Activated T-helper 2 cell treated with anti-CD3 and anti-CD28 coated beads, Interferon-gamma antibody, Interleukin-2, Interleukin-4, amounts not matched to agents 10 μg/mL and 5 μg/mL and 100 μg/mL, durations not matched to agents 14 hours and 24 hours and 36 hours (primary cell): ENCODE measurements at regions of chr22 and their contacts with region 1.

Region 1: DNA sequence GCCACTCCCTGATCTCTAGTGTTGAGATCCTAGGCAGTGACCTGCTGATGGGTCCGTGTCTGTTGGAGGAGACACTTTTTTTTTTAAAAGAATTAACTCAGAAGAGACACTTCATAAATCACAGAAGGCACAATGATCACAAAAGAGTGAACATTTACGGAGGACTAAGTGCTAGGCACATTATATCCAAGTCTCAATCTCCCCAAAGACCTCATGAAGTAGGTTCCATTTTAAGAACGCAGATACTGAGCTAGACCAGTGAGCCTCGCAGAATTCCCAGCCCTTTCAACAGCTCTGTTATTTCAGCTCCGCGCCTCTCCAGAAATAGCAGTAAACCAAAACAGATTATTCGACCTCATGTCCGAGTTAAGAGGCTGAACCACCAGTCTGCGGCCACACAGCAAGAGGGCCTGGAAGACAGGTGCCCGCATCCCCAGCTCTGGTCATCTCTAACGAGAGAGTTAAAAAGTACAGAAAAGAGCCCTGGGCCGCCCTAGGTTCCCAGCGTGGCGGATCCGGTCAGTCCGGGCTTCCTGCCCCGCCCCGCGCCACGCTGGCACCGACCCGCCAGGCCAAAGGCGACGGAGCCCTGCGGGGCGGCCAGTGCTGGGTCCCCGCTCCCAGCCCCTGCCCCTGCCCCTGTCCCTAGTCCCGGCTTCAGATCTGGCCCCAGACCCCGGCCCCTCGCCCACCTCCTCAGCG is 612 bp downstream of the XBP1 start:
- DNase-seq: no peak
- H3K4me3 Mint-ChIP-seq: peak overlapping the region; percentile 99
- H3K27ac Mint-ChIP-seq: peak overlapping the region; percentile 97
- H3K4me1 Mint-ChIP-seq: peaks cover 43% of the 10 kb centered on the region
- H3K27me3 Mint-ChIP-seq: no peaks in the 10 kb centered on the region

Region 2: DNA sequence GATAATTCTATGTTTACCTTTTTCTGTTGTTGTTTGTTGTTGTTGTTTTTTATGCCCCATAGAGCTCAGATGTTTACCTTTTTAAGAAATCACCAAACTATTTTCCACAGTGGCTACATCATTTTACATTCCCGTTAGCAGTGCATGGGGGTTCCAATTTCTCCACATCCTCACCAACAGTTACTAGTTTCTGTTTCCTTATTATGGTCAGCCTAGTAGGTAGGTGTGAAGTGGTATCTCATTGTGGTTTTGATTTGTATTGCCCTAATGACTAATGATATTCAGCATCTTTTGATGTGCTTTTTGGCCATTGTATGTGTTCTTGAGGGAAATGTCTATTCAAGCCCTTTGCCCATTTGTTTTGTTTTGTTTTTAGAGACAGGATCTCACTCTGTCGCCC is 85.7 kb before region 1 on chr22:
- intact Hi-C with region 1: no loop called
- DNase-seq: no peak
- H3K4me3 Mint-ChIP-seq: no peak overlapping the region
- H3K27ac Mint-ChIP-seq: no peak overlapping the region
- H3K4me1 Mint-ChIP-seq: peaks cover 20% of the 10 kb centered on the region
- H3K27me3 Mint-ChIP-seq: no peaks in the 10 kb centered on the region

Region 3: GRCh38 chr22:28741758-28742561 is 57.8 kb before region 1 on chr22 and contains the starts of genes CHEK2 and HSCB:
- intact Hi-C with region 1: loop called (anchors 1 kb)
- DNase-seq: peak; percentile 97
- H3K4me3 Mint-ChIP-seq: peak within 1 kb of the TSS; percentile 87
- H3K27ac Mint-ChIP-seq: peak within 1 kb of the TSS; percentile 83
- H3K4me1 Mint-ChIP-seq: peaks cover 36% of the 10 kb centered on the region
- H3K27me3 Mint-ChIP-seq: no peaks in the 10 kb centered on the region
- total RNA-seq, gene CHEK2: 33.7 and 33.8 TPM in 2 replicates
- total RNA-seq, gene HSCB: 14.1 and 14.6 TPM in 2 replicates

Region 4: DNA sequence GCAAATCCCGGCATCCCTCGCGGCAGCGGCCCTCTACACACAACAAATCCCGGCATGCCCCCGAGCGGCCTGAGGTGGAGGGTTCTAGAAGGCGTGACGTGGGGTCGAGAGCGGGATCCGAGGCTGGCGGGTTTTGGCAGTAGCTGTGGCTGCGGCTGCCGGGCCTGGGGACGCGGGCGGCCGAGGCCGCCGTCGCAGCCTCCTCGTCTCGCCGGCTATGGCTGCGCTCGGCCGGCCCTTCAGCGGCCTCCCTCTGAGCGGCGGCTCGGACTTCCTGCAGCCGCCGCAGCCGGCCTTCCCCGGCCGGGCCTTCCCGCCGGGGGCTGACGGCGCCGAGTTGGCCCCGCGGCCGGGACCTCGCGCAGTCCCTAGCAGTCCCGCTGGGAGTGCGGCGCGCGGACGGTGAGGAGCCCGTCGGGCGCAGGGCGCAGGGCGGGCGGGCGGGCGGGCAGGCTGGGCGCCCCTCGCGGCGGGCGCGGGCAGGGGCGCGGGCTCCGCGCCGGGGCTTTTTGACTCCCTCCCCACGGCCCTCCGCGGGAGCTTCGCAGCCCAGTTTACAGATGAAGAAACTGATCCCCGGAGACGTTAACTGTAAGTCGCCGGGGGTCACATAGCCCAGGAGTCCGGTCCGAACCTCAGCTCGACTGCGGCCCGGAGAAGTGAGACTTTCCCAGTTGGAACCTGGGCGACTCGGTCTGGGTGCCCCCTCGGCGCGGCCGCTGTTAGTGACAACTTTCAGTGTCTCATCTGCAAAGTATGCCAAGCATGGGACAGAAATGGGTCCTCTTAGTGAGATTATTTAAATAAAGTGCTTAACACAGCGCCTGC is 26.9 kb before region 1 on chr22 and contains the start of gene CCDC117:
- intact Hi-C with region 1: loop called (anchors 1 kb)
- DNase-seq: peak; percentile 89
- H3K4me3 Mint-ChIP-seq: peak within 1 kb of the TSS; percentile 99
- H3K27ac Mint-ChIP-seq: peak within 1 kb of the TSS; percentile 100
- H3K4me1 Mint-ChIP-seq: peaks cover 19% of the 10 kb centered on the region
- H3K27me3 Mint-ChIP-seq: no peaks in the 10 kb centered on the region
- total RNA-seq, gene CCDC117: 33.9 and 38.6 TPM in 2 replicates

Region 5: GRCh38 chr22:28783786-28784671 is 15.7 kb before region 1 on chr22:
- intact Hi-C with region 1: no loop called
- DNase-seq: no peak
- H3K4me3 Mint-ChIP-seq: no peak overlapping the region
- H3K27ac Mint-ChIP-seq: no peak overlapping the region
- H3K4me1 Mint-ChIP-seq: peaks cover 16% of the 10 kb centered on the region
- H3K27me3 Mint-ChIP-seq: no peaks in the 10 kb centered on the region

Region 6: GRCh38 chr22:28810821-28811491 is 11.2 kb after region 1 on chr22:
- intact Hi-C with region 1: loop called (anchors 1 kb)
- DNase-seq: peak; percentile 50
- H3K4me3 Mint-ChIP-seq: peak overlapping the region; percentile 59
- H3K27ac Mint-ChIP-seq: peak overlapping the region; percentile 82
- H3K4me1 Mint-ChIP-seq: peaks cover 69% of the 10 kb centered on the region
- H3K27me3 Mint-ChIP-seq: no peaks in the 10 kb centered on the region

Region 7: DNA sequence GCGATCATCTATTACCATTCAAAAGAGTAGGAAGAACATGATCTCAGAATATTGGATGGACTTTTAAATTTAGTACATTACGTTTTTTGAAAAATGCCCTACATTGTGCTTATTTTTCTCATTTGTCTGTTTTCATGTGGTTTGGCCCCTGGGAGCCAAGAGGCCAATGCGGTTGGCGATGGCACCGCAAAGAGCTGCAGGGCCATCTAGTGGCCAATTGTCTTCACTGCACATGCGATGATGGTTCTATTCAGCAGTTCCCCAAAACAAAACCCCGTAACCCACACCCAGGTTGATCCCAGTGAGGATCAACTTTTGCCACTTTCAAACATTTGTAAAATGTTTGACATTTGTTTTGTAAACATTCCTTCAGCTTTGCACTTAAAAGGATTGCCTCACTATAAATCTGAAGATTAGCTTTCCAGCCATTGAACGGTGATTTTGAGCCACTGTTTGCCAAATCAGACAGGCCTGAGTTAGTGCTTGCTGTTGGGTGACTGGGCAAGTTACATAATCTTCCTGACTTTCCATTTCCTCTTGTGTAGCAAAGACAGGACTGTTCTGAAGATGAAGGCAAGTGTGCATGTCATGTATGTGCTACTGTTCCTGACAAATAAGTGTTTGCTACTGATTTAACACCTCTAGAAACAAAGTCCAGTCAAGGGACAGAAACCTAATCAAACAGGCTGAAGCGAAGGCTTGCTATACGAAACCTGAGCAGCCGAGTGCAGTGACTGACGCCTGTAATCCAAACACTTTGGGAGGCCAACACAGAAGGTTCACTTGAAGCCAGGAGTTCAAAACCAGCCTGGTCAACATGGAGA is 29.8 kb after region 1 on chr22:
- intact Hi-C with region 1: loop called (anchors 2 kb)
- DNase-seq: peak; percentile 65
- H3K4me3 Mint-ChIP-seq: no peak overlapping the region
- H3K27ac Mint-ChIP-seq: no peak overlapping the region
- H3K4me1 Mint-ChIP-seq: peaks cover 32% of the 10 kb centered on the region
- H3K27me3 Mint-ChIP-seq: no peaks in the 10 kb centered on the region

Region 8: GRCh38 chr22:28841111-28841510 is 41.4 kb after region 1 on chr22:
- intact Hi-C with region 1: no loop called
- DNase-seq: no peak
- H3K4me3 Mint-ChIP-seq: no peak overlapping the region
- H3K27ac Mint-ChIP-seq: no peak overlapping the region
- H3K4me1 Mint-ChIP-seq: no peaks in the 10 kb centered on the region
- H3K27me3 Mint-ChIP-seq: no peaks in the 10 kb centered on the region

Region 9: DNA sequence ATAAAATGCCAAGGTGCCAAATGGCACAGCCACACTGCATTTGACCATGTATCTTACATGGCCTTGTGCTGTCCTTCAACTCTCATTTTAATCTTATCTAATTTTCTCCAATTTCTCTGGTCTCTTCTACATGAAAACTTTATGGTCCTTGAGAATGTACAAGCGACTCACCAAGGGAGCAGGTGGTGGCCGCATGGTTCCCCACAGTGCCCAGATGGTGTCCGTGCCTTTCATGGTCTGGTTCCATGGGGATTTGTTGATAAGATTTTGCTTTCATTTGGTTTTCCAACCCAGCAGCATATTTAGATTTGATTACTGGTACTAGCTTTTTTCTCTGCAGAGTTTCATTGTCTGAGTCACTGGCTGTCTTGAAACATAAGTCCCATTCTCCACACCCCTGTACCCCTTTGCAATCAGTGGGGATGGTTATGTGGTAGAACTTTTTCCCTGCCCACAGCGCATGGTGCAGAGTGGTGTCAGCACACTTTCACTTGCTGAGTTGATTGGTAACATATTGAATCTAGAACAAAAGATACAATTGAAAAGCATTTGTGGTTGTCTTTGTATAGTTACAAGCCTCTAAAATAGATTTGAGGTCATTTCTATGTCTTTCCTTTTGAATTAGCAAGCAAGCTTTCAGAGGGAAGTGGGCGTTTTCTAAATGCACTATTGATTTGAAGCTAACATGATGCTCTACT is 107.7 kb after region 1 on chr22:
- intact Hi-C with region 1: no loop called
- DNase-seq: no peak
- H3K4me3 Mint-ChIP-seq: no peak overlapping the region
- H3K27ac Mint-ChIP-seq: peak overlapping the region; percentile 76
- H3K4me1 Mint-ChIP-seq: peaks cover 25% of the 10 kb centered on the region
- H3K27me3 Mint-ChIP-seq: peaks cover 64% of the 10 kb centered on the region

Region 10: DNA sequence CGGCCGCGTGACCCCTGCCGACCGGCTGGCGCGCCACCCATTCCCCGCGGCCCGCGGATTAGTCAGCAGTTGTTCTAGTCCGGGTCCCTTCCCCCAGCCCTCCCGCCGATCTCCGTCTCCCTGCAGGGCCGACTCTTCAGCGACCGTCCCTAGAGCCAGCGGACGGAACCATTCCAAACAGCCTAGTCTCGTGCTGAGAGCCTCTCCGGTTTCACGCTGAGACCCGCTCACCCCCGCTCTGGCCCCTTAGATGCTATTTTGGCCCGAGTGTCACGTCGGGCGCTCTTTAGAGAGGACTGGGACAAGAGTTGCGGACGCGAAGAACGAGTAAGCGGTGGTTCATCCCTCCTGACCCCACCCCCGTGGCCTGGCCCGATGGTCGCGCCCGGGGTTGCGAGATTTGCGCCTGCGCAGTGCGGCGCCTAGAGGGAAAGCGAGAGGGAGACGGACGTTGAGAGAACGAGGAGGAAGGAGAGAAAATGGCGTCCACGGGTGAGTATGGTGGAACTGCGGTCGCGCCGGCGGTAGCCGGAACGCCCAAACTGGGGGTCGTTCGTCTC is 468.2 kb after region 1 on chr22 and contains the starts of genes EWSR1 and RHBDD3:
- intact Hi-C with region 1: loop called (anchors 5 kb)
- DNase-seq: peak; percentile 96
- H3K4me3 Mint-ChIP-seq: peak within 1 kb of the TSS; percentile 86
- H3K27ac Mint-ChIP-seq: peak within 1 kb of the TSS; percentile 94
- H3K4me1 Mint-ChIP-seq: peaks cover 34% of the 10 kb centered on the region
- H3K27me3 Mint-ChIP-seq: no peaks in the 10 kb centered on the region
- total RNA-seq, gene EWSR1: 425 and 436 TPM in 2 replicates
- total RNA-seq, gene RHBDD3: 46.0 and 48.0 TPM in 2 replicates